Naive thymus-derived CD4-positive, alpha-beta T cell (primary cell): ENCODE measurements at regions of chr3 and their contacts with region 1.

Region 1: GRCh38 chr3:42502429-42503250 is at the start of gene VIPR1:
- DNase-seq: peak; percentile 85 to 97 (median 95)
- ATAC-seq: peak; percentile 98
- H3K4me3 ChIP-seq: peak within 1 kb of the TSS; percentile 70
- H3K4me3 Mint-ChIP-seq: peak within 1 kb of the TSS; percentile 91 to 98 (median 96)
- H3K27ac ChIP-seq: peak within 1 kb of the TSS; percentile 79
- H3K27ac Mint-ChIP-seq: peak within 1 kb of the TSS; percentile 70 to 96 (median 94)
- H3K4me1 ChIP-seq: peaks cover 0 to 39% of the 10 kb centered on the region in 2 donors
- H3K4me1 Mint-ChIP-seq: peaks cover 31 to 64% (median 47%) of the 10 kb centered on the region in 7 donors
- H3K27me3 ChIP-seq: peaks cover 0 to 5% of the 10 kb centered on the region in 2 donors
- H3K27me3 Mint-ChIP-seq: peaks cover 18 to 49% (median 20%) of the 10 kb centered on the region in 5 donors
- total RNA-seq, gene VIPR1: 8.0 to 133 (median 70.5) TPM

Region 2: GRCh38 chr3:41961750-41962679 is 540.6 kb before region 1 on chr3 and contains the start of gene ULK4:
- CTCF ChIA-PET with region 1: no interaction called
- POLR2A ChIA-PET with region 1: no interaction called
- intact Hi-C with region 1: loop called in 1 of 2 experiments (anchors 1 kb)
- DNase-seq: peak; percentile 77 to 96 (median 94)
- ATAC-seq: peak; percentile 93
- H3K4me3 ChIP-seq: peak within 1 kb of the TSS; percentile 99
- H3K4me3 Mint-ChIP-seq: peak within 1 kb of the TSS; percentile 90 to 100 (median 98)
- H3K27ac ChIP-seq: peak within 1 kb of the TSS; percentile 83
- H3K27ac Mint-ChIP-seq: peak within 1 kb of the TSS; percentile 88 to 100 (median 96)
- H3K4me1 ChIP-seq: peaks cover 0 to 16% of the 10 kb centered on the region in 2 donors
- H3K4me1 Mint-ChIP-seq: peaks cover 8 to 22% (median 16%) of the 10 kb centered on the region in 7 donors
- H3K27me3 ChIP-seq: no peaks in the 10 kb centered on the region
- H3K27me3 Mint-ChIP-seq: peaks cover 0 to 3% (median 0%) of the 10 kb centered on the region in 5 donors
- total RNA-seq, gene ULK4: 14.0 to 22.3 (median 21.1) TPM

Region 3: DNA sequence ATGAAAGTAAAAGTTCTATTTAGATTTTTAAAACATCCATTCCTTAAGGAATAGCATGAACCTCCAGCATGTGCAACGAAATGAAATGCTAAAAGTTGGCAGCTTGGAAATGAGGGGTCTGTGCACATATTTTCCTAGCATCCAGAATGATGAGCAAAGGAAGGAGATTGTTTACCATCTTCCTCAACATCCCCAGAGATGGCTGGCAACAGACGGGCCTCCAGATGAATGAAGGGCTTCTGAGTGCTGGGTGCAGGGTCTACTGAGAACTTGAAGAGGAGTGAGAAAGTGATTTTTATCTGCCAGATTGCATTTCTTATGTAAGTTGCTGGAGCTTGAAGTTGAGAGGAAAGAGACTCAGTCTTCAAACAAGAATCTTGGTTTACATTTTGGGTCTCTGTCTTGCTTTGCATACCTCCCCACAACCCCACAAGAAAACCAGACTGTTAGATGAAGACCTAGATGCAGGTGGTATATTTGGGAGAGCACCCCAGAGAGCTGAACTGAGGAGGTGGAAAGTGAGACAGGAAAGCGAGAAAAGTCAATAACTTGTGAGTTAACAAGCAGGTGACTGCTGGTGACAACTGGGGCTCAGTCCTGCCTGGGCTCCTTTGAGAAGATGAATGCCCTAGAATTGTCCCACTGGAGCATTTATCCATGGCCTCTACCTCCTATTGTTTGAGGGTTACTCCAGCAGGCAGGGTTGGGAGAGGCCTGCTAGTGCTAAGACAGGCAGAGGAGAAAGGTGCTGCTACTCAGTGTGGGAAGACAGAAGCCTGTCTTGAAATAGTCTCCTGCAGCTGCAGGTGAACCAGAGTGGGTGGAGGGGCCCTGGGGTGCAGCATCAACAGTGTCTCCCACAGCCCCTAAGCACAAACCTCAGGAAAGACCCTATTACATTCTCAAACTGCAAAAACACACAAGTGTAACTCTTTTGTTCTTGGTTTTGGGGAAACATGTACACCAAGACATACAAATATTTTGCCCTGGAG is 226.2 kb before region 1 on chr3:
- CTCF ChIA-PET with region 1: no interaction called
- POLR2A ChIA-PET with region 1: no interaction called
- intact Hi-C with region 1: no loop called
- DNase-seq: no peak
- ATAC-seq: no peak
- H3K4me3 ChIP-seq: no peak overlapping the region
- H3K4me3 Mint-ChIP-seq: no peak overlapping the region
- H3K27ac ChIP-seq: no peak overlapping the region
- H3K27ac Mint-ChIP-seq: no peak overlapping the region
- H3K4me1 ChIP-seq: no peaks in the 10 kb centered on the region
- H3K4me1 Mint-ChIP-seq: no peaks in the 10 kb centered on the region
- H3K27me3 ChIP-seq: no peaks in the 10 kb centered on the region
- H3K27me3 Mint-ChIP-seq: no peaks in the 10 kb centered on the region

Region 4: DNA sequence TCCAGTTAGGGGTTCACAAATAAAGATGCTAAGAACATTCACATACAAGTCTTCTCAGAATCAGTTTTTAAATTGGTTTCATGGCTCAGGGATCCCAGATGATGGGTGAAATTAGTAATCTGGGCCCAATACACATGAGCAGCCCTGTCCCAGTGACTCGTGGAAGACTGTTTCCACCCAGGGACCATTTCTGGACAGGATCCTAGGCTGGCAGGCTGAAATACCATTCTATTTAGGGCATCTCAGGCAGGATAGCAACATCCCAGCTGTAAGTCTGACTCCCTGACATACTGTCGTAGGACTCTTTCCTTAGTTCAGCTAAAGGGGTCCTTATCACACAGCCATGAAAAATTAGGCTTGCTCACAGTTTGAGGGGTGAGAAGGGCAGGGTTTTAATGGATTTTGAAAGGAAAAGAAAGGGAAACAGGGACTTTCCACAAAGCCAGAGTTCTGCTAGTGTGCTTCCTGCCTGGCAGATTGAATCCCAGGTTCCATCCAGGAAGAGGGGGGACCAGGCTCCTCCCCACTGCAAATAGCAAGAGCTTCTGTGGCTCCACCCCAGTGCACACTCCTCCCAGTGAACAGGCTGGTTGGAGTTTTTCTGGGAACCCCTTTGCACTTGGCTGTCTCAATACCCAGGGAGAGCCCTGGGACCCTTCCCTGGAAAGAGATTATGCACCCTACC is 51.0 kb before region 1 on chr3:
- CTCF ChIA-PET with region 1: no interaction called
- POLR2A ChIA-PET with region 1: no interaction called
- intact Hi-C with region 1: no loop called
- DNase-seq: no peak
- ATAC-seq: no peak
- H3K4me3 ChIP-seq: no peak overlapping the region
- H3K4me3 Mint-ChIP-seq: no peak overlapping the region
- H3K27ac ChIP-seq: no peak overlapping the region
- H3K27ac Mint-ChIP-seq: no peak overlapping the region
- H3K4me1 ChIP-seq: no peaks in the 10 kb centered on the region
- H3K4me1 Mint-ChIP-seq: no peaks in the 10 kb centered on the region
- H3K27me3 ChIP-seq: no peaks in the 10 kb centered on the region
- H3K27me3 Mint-ChIP-seq: peaks cover 0 to 9% (median 3%) of the 10 kb centered on the region in 5 donors

Region 5: GRCh38 chr3:42518800-42519567 is 16.3 kb after region 1 on chr3:
- CTCF ChIA-PET with region 1: interaction called, 15 read pairs
- POLR2A ChIA-PET with region 1: interaction called, 26 read pairs
- intact Hi-C with region 1: loop called in 1 of 2 experiments (anchors 2 kb)
- DNase-seq: peak in 3 of 9 donors; percentile 36 to 52 (median 49)
- ATAC-seq: peak; percentile 56
- H3K4me3 ChIP-seq: no peak overlapping the region
- H3K4me3 Mint-ChIP-seq: peak overlapping the region in 6 of 10 donors; percentile 28 to 73 (median 67)
- H3K27ac ChIP-seq: peak overlapping the region; percentile 51
- H3K27ac Mint-ChIP-seq: peak overlapping the region in 8 of 9 donors; percentile 73 to 95 (median 86)
- H3K4me1 ChIP-seq: peaks cover 0 to 23% of the 10 kb centered on the region in 2 donors
- H3K4me1 Mint-ChIP-seq: peaks cover 19 to 55% (median 39%) of the 10 kb centered on the region in 7 donors
- H3K27me3 ChIP-seq: no peaks in the 10 kb centered on the region
- H3K27me3 Mint-ChIP-seq: no peaks in the 10 kb centered on the region

Region 6: DNA sequence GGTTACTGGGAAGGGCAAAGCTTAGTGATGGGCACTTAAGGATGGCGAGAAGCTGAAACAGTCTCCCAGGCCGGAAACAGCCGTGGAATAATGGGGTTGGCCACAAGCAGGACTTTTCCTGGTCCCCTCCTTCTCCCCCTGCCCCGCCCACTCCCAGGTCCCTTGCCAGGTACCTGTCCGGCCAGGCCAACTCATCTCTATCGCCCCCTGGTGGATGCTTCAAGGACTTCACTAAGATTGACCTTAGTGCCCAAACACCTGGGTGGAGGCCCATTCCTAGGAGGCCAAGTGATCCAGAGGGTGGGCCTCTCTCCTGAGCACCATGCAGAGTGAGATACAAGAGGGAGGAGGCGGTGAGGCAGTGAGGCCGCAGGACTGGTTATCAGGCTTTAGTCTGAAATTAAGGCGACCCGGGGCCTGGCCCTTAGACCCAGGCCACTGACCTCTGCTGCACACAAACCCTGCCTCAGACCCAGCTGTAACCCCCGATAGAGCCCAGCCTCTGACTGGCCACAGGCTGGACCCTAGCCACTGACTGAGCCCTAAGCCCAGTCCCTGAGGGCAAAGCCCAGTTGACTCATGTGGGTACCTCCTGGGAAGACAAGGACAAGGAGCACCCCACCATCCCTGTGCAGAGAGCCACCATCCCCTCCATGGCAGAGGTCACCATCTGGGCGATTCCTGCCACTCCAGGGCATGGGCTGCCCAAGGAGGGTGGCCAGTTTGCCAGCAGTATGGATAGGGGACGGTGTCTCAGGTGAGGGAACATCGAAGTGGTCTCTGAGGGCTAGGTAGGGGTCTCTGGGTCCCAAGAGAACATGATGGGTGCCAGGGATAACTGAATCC is 37.5 kb after region 1 on chr3:
- CTCF ChIA-PET with region 1: interaction called, 136 read pairs
- POLR2A ChIA-PET with region 1: interaction called, 82 read pairs
- intact Hi-C with region 1: loop called (anchors 1 kb)
- DNase-seq: peak in 8 of 9 donors; percentile 31 to 69 (median 48)
- ATAC-seq: peak; percentile 76
- H3K4me3 ChIP-seq: no peak overlapping the region
- H3K4me3 Mint-ChIP-seq: no peak overlapping the region
- H3K27ac ChIP-seq: no peak overlapping the region
- H3K27ac Mint-ChIP-seq: peak overlapping the region in 7 of 9 donors; percentile 33 to 95 (median 67)
- H3K4me1 ChIP-seq: peaks cover 0 to 9% of the 10 kb centered on the region in 2 donors
- H3K4me1 Mint-ChIP-seq: peaks cover 2 to 36% (median 31%) of the 10 kb centered on the region in 7 donors
- H3K27me3 ChIP-seq: no peaks in the 10 kb centered on the region
- H3K27me3 Mint-ChIP-seq: no peaks in the 10 kb centered on the region

Region 7: DNA sequence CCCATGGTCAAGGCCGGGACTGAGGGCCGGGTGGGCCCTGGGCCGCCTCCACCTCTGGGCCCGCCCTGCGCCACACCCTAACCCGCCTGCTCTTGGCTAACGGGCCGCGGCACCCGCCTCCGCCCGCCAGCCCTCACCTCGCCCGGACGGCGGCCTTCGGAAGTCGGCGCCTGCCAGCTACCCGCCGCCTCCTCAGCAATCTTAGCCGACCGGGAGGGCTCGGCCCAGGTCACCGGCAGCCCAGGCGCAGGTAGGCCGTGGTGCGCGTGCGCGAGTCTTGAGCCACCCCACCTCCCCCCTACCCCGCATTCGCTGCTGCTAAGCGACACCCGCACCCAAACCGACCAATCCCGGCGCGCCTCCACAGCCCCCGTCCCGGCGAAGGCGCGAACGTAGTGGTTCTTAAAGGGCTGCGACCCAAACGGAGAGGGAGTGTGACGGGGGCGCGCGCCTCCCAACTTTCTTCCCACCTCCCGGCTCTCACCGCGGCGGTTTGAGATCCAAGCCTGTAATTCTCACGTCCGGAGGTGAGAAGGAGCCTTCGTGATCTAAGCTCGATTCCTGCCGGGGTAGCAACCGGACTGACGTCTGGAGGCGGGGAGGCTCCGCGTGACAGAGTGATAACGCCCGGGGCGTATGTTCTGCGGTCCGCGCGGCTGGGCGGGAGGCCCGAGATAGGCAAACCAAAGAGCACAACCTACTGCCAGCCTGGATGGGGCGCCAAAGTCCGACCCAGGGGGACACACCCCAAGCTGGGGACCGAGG is 79.3 kb after region 1 on chr3 and contains the start of gene SEC22C:
- CTCF ChIA-PET with region 1: interaction called, 5 read pairs
- POLR2A ChIA-PET with region 1: interaction called, 3 read pairs
- intact Hi-C with region 1: loop called in 1 of 2 experiments (anchors 1 kb)
- DNase-seq: peak; percentile 86 to 95 (median 94)
- ATAC-seq: peak; percentile 94
- H3K4me3 ChIP-seq: peak within 1 kb of the TSS; percentile 86
- H3K4me3 Mint-ChIP-seq: peak within 1 kb of the TSS; percentile 77 to 97 (median 94)
- H3K27ac ChIP-seq: peak within 1 kb of the TSS; percentile 92
- H3K27ac Mint-ChIP-seq: peak within 1 kb of the TSS; percentile 89 to 99 (median 96)
- H3K4me1 ChIP-seq: peaks cover 19 to 25% of the 10 kb centered on the region in 2 donors
- H3K4me1 Mint-ChIP-seq: peaks cover 31 to 60% (median 57%) of the 10 kb centered on the region in 7 donors
- H3K27me3 ChIP-seq: no peaks in the 10 kb centered on the region
- H3K27me3 Mint-ChIP-seq: no peaks in the 10 kb centered on the region
- total RNA-seq, gene SEC22C: 39.7 to 54.8 (median 51.3) TPM

Region 8: DNA sequence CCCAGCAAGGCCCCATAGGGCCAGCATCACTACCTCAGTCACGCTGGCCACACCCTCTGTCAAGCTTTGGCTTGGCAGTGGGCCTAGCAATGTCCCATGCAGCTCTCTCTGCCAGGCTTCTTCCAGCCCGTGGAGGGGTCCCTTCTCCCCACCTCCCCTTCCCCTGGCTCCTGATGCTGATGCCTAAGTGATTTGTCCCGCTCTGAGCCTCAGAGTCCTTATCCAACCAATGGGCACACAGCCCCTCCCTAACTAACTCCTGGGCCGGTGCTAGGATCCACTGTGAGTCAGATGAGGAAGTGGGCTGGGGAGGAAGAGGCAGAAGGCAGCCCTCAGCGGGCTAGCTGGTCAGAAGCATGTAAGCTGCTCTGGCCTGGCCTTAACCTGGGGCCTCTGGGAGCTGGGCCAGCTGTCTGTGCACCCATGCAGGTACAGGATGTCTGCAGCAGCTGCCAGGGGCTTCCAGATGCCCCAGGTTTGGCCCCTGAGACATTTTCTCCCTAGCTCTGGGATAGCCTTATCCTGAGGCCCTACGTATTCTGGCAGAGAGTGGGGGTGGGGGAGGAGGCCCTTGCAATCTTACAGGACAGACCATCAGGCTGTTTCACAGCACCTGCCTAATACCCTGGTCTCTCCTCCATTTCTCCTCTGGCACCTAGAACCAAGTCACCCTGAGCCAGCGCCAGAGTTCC is 150.1 kb after region 1 on chr3:
- CTCF ChIA-PET with region 1: no interaction called
- POLR2A ChIA-PET with region 1: no interaction called
- intact Hi-C with region 1: loop called in 1 of 2 experiments (anchors 5 kb)
- DNase-seq: no peak
- ATAC-seq: peak; percentile 76
- H3K4me3 ChIP-seq: no peak overlapping the region
- H3K4me3 Mint-ChIP-seq: peak overlapping the region in 9 of 10 donors; percentile 66 to 91 (median 82)
- H3K27ac ChIP-seq: no peak overlapping the region
- H3K27ac Mint-ChIP-seq: peak overlapping the region in 3 of 9 donors; percentile 32 to 57 (median 48)
- H3K4me1 ChIP-seq: peaks cover 5 to 12% of the 10 kb centered on the region in 2 donors
- H3K4me1 Mint-ChIP-seq: peaks cover 9 to 22% (median 12%) of the 10 kb centered on the region in 7 donors
- H3K27me3 ChIP-seq: no peaks in the 10 kb centered on the region
- H3K27me3 Mint-ChIP-seq: peaks cover 0 to 4% (median 0%) of the 10 kb centered on the region in 5 donors

Region 9: GRCh38 chr3:42880601-42881451 is 378.2 kb after region 1 on chr3:
- CTCF ChIA-PET with region 1: no interaction called
- POLR2A ChIA-PET with region 1: no interaction called
- intact Hi-C with region 1: loop called (anchors 2 to 5 kb)
- DNase-seq: peak; percentile 66 to 87 (median 83)
- ATAC-seq: peak; percentile 99
- H3K4me3 ChIP-seq: peak overlapping the region; percentile 64
- H3K4me3 Mint-ChIP-seq: peak overlapping the region; percentile 76 to 89 (median 85)
- H3K27ac ChIP-seq: peak overlapping the region; percentile 57
- H3K27ac Mint-ChIP-seq: peak overlapping the region; percentile 55 to 97 (median 82)
- H3K4me1 ChIP-seq: peaks cover 4 to 13% of the 10 kb centered on the region in 2 donors
- H3K4me1 Mint-ChIP-seq: peaks cover 6 to 17% (median 15%) of the 10 kb centered on the region in 7 donors
- H3K27me3 ChIP-seq: no peaks in the 10 kb centered on the region
- H3K27me3 Mint-ChIP-seq: peaks cover 0 to 25% (median 0%) of the 10 kb centered on the region in 5 donors